Uterus (tissue), 4 donors: ENCODE measurements at regions of chr15 and their contacts with region 1.

Region 1: GRCh38 chr15:27850981-27851857 is 247.9 kb downstream of the OCA2 start:
- DNase-seq: no peak
- H3K4me3 ChIP-seq: no peak overlapping the region
- H3K27ac ChIP-seq: no peak overlapping the region
- H3K4me1 ChIP-seq: no peaks in the 10 kb centered on the region
- H3K27me3 ChIP-seq: no peaks in the 10 kb centered on the region
- CTCF ChIP-seq: no peak
- POLR2A ChIP-seq: no peak

Region 2: GRCh38 chr15:27797765-27798164 is 53.5 kb before region 1 on chr15:
- intact Hi-C with region 1: loop called (anchors 10 kb)
- DNase-seq: no peak
- H3K4me3 ChIP-seq: no peak overlapping the region
- H3K27ac ChIP-seq: no peak overlapping the region
- H3K4me1 ChIP-seq: no peaks in the 10 kb centered on the region
- H3K27me3 ChIP-seq: no peaks in the 10 kb centered on the region
- CTCF ChIP-seq: no peak
- POLR2A ChIP-seq: no peak

Region 3: GRCh38 chr15:27965546-27965945 is 114.3 kb after region 1 on chr15:
- intact Hi-C with region 1: no loop called
- DNase-seq: no peak
- H3K4me3 ChIP-seq: no peak overlapping the region
- H3K27ac ChIP-seq: no peak overlapping the region
- H3K4me1 ChIP-seq: no peaks in the 10 kb centered on the region
- H3K27me3 ChIP-seq: no peaks in the 10 kb centered on the region
- CTCF ChIP-seq: no peak
- POLR2A ChIP-seq: no peak

Region 4: GRCh38 chr15:28021281-28022039 is 170.2 kb after region 1 on chr15:
- intact Hi-C with region 1: no loop called
- DNase-seq: no peak
- H3K4me3 ChIP-seq: no peak overlapping the region
- H3K27ac ChIP-seq: no peak overlapping the region
- H3K4me1 ChIP-seq: no peaks in the 10 kb centered on the region
- H3K27me3 ChIP-seq: no peaks in the 10 kb centered on the region
- CTCF ChIP-seq: peak in 1 of 4 experiments; percentile 12
- POLR2A ChIP-seq: no peak